HEK293 (cell line): ENCODE measurements at regions of chr6 and their contacts with region 1.

Region 1: DNA sequence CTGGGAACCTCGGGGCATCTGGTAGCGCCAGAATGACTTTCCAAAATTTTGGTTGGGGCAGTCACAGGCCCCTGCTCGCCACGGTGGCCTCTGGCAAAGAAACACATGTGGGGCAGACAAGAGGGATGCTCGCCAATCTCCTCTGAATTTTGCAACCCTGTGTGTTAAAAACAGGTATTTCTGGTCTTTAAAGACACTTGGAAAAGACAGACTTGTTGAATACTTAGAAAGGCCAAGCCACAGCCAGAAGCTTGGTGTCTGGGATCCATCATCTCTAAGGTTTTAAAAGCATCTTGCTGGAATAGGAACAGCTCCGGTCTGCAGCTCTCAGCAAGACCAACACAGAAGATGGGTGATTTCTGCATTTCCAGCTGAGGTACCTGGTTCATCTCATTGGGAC is 31.2 kb downstream of the HLA-E start:
- H3K4me3 ChIP-seq: no peak overlapping the region
- H3K27ac ChIP-seq: no peak overlapping the region
- H3K4me1 ChIP-seq: no peaks in the 10 kb centered on the region
- CTCF ChIP-seq: no peak

Region 2: DNA sequence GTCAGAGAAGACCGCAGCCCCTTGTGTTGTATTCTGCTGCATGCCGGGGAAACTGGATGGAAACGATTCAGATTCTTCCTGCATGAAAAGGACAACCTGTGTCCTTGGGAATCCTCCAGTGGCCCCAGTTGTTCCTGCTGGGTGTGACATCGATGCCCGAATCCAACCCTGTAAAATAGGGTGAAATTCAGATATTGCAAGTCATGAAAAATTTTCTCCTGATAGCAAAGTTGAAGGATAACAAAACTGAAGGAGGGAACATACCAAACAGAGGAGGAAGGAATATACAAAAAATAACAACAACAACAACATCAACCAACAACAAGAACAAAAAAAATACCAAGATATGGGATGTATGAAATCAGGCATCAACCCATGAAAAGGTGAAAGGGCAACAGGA is 59.5 kb before region 1 on chr6:
- CTCF ChIA-PET with region 1: no interaction called
- POLR2A ChIA-PET with region 1: no interaction called
- H3K4me3 ChIP-seq: no peak overlapping the region
- H3K27ac ChIP-seq: no peak overlapping the region
- H3K4me1 ChIP-seq: no peaks in the 10 kb centered on the region
- CTCF ChIP-seq: no peak

Region 3: GRCh38 chr6:30533460-30534294 is 13.2 kb after region 1 on chr6:
- CTCF ChIA-PET with region 1: interaction called, 16 read pairs
- POLR2A ChIA-PET with region 1: no interaction called
- H3K4me3 ChIP-seq: no peak overlapping the region
- H3K27ac ChIP-seq: no peak overlapping the region
- H3K4me1 ChIP-seq: no peaks in the 10 kb centered on the region
- CTCF ChIP-seq: no peak

Region 4: GRCh38 chr6:31058128-31058894 is 537.8 kb after region 1 on chr6:
- CTCF ChIA-PET with region 1: interaction called, 10 read pairs
- POLR2A ChIA-PET with region 1: no interaction called
- H3K4me3 ChIP-seq: no peak overlapping the region
- H3K27ac ChIP-seq: no peak overlapping the region
- H3K4me1 ChIP-seq: no peaks in the 10 kb centered on the region
- CTCF ChIP-seq: peak; percentile 47; the same call in 1 of the 2 replicates